AG04450 (cell line): ENCODE measurements at regions of chr19 and their contacts with region 1.

Region 1: GRCh38 chr19:11293433-11294389 is 2.2 kb upstream of the TSPAN16 start:
- DNase-seq: peak; percentile 72
- H3K4me3 ChIP-seq: peak overlapping the region; percentile 45
- H3K27ac ChIP-seq: peak overlapping the region; percentile 21
- H3K27me3 ChIP-seq: no peaks in the 10 kb centered on the region
- CTCF ChIP-seq: peak; percentile 97

Region 2: DNA sequence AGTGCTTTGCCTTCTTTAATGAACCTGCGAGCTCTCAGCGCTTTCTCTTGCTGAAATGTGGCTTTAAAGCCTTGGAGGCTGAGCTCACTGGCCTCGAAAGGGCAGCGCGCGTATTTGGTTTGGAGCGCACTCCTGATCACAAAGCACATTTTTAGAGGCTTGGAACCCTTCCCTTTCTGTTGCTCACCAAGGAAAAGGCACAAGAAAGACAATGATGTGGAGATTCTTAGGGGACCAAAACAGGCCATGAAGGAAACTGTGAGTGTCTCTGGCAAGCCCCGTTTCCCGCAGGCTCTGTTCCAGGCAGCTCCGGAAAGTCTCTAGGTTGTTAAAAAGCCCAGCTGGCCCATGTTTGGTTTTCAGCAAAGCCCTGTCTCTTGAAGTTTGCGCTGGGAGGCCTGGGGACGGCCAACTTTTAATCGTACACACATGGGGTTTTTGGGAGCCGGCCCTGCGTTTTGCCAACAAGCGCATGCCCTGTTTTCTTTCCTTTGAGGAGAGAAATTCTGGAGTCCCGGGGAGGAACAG is 128.8 kb before region 1 on chr19:
- CTCF ChIA-PET with region 1: no interaction called
- POLR2A ChIA-PET with region 1: no interaction called
- DNase-seq: no peak
- H3K4me3 ChIP-seq: no peak overlapping the region
- H3K27ac ChIP-seq: peak overlapping the region; percentile 61
- H3K27me3 ChIP-seq: no peaks in the 10 kb centered on the region
- CTCF ChIP-seq: no peak

Region 3: GRCh38 chr19:11176466-11177193 is 117.1 kb before region 1 on chr19:
- CTCF ChIA-PET with region 1: no interaction called
- POLR2A ChIA-PET with region 1: no interaction called
- DNase-seq: no peak
- H3K4me3 ChIP-seq: no peak overlapping the region
- H3K27ac ChIP-seq: no peak overlapping the region
- H3K27me3 ChIP-seq: no peaks in the 10 kb centered on the region
- CTCF ChIP-seq: no peak

Region 4: DNA sequence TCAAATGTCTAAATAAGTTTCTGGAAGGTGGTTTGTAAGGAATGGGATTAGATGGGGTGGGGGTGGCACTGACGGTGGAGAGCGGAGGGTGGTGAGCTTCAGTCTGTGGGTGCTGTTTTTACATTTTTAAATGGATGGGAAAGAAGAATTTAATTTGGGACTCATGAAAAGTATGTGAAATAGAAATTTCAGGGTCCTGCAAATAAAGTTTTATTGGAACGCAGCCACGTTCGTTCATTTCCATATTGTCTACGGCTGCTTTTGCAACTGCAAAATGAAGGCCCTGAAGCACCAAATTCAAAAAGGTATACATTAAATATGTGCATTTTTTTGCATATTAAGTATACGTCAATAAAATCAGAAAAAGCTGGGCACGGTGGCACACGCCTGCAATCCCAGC is 106.3 kb before region 1 on chr19:
- CTCF ChIA-PET with region 1: no interaction called
- POLR2A ChIA-PET with region 1: no interaction called
- DNase-seq: no peak
- H3K4me3 ChIP-seq: no peak overlapping the region
- H3K27ac ChIP-seq: no peak overlapping the region
- H3K27me3 ChIP-seq: no peaks in the 10 kb centered on the region
- CTCF ChIP-seq: no peak

Region 5: GRCh38 chr19:11242864-11243797 is 50.6 kb before region 1 on chr19:
- CTCF ChIA-PET with region 1: interaction called, 12 read pairs
- POLR2A ChIA-PET with region 1: no interaction called
- DNase-seq: peak; percentile 65
- H3K4me3 ChIP-seq: peak overlapping the region; percentile 10; the same call in 1 of the 2 replicates
- H3K27ac ChIP-seq: no peak overlapping the region
- H3K27me3 ChIP-seq: no peaks in the 10 kb centered on the region
- CTCF ChIP-seq: peak; percentile 67

Region 6: DNA sequence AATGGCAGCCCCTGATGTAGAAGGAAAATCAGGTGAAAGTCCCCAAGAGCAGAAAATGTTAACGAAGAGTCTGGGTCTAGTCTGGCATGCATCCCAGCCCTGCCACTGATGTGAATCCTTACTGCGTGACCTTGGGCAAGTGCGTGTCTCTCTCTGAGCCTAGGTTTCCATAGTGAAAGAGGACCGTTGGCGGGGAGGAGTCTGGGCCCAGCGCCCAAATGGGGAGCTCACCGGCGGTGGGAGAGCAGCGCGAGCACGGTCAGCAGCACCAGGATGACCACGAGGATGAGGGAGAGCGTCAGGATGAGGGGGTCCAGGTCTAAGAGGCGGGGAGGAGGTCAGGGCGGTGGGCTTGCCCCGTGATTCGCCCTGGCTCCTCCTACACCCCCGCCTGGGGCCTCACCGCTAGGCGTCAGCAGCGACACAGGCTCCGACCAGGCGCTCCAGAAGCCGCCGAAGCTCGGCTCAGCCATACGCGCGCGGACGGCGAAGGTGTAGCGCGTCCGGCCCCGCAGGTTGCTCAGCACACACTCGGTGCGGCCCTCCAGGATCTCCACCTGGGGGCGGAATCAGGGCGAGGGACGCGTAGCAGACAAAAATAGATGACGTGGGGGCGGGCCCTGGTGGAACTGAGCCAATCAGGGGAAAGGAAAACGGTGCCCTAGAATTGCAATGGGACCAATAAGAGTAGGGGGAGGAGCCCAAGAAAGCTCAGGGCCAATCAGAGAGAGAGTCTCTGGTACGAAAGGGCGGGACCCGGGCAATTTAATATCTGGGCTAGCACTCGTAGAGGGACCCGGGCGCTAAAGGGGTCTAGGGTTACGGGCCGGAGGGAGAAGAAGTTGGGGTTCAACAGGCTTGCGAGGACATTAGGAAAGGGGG is 87.2 kb after region 1 on chr19:
- CTCF ChIA-PET with region 1: interaction called, 14 read pairs
- POLR2A ChIA-PET with region 1: interaction called, 8 read pairs
- DNase-seq: peak; percentile 80
- H3K4me3 ChIP-seq: peak overlapping the region; percentile 82
- H3K27ac ChIP-seq: peak overlapping the region; percentile 61
- H3K27me3 ChIP-seq: peaks cover 3% of the 10 kb centered on the region
- CTCF ChIP-seq: peak; percentile 77

Region 7: GRCh38 chr19:11435058-11435832 is 141.5 kb after region 1 on chr19 and contains the starts of genes ODAD3 and PRKCSH:
- CTCF ChIA-PET with region 1: interaction called, 10 read pairs
- POLR2A ChIA-PET with region 1: no interaction called
- DNase-seq: peak; percentile 99
- H3K4me3 ChIP-seq: peak within 1 kb of the TSS; percentile 99
- H3K27ac ChIP-seq: peak within 1 kb of the TSS; percentile 61
- H3K27me3 ChIP-seq: no peaks in the 10 kb centered on the region
- CTCF ChIP-seq: peak; percentile 91
- polyA plus RNA-seq, gene ODAD3: 0.09 and 0.21 TPM in 2 replicates
- polyA plus RNA-seq, gene PRKCSH: 125 and 165 TPM in 2 replicates

Region 8: GRCh38 chr19:11482384-11483050 is 188.8 kb after region 1 on chr19:
- CTCF ChIA-PET with region 1: interaction called, 21 read pairs
- POLR2A ChIA-PET with region 1: interaction called, 10 read pairs
- DNase-seq: peak; percentile 32
- H3K4me3 ChIP-seq: peak overlapping the region; percentile 51
- H3K27ac ChIP-seq: no peak overlapping the region
- H3K27me3 ChIP-seq: peaks cover 40% of the 10 kb centered on the region
- CTCF ChIP-seq: peak; percentile 82